Body of pancreas (tissue), 4 donors: ENCODE measurements at regions of chr2 and their contacts with region 1.

Region 1: GRCh38 chr2:46720592-46721185 is 194.9 kb downstream of the MCFD2 start:
- DNase-seq: no peak
- ATAC-seq: no peak
- H3K4me3 ChIP-seq: no peak overlapping the region
- H3K27ac ChIP-seq: no peak overlapping the region
- H3K4me1 ChIP-seq: peaks cover 55% of the 10 kb centered on the region
- H3K27me3 ChIP-seq: no peaks in the 10 kb centered on the region
- CTCF ChIP-seq: no peak
- POLR2A ChIP-seq: no peak

Region 2: GRCh38 chr2:46776687-46777327 is 56.1 kb after region 1 on chr2:
- intact Hi-C with region 1: loop called (anchors 10 kb)
- DNase-seq: peak; percentile 61 to 74 (median 68)
- ATAC-seq: no peak
- H3K4me3 ChIP-seq: no peak overlapping the region
- H3K27ac ChIP-seq: no peak overlapping the region
- H3K4me1 ChIP-seq: no peaks in the 10 kb centered on the region
- H3K27me3 ChIP-seq: no peaks in the 10 kb centered on the region
- CTCF ChIP-seq: peak; percentile 32 to 62 (median 52)
- POLR2A ChIP-seq: no peak

Region 3: GRCh38 chr2:47046271-47046670 is 325.6 kb after region 1 on chr2:
- intact Hi-C with region 1: no loop called
- DNase-seq: no peak
- ATAC-seq: no peak
- H3K4me3 ChIP-seq: no peak overlapping the region
- H3K27ac ChIP-seq: no peak overlapping the region
- H3K4me1 ChIP-seq: peaks cover 15% of the 10 kb centered on the region
- H3K27me3 ChIP-seq: no peaks in the 10 kb centered on the region
- CTCF ChIP-seq: no peak
- POLR2A ChIP-seq: no peak